ENCODE measurements at regions of chr7 and their contacts with region 1.

Region 1: DNA sequence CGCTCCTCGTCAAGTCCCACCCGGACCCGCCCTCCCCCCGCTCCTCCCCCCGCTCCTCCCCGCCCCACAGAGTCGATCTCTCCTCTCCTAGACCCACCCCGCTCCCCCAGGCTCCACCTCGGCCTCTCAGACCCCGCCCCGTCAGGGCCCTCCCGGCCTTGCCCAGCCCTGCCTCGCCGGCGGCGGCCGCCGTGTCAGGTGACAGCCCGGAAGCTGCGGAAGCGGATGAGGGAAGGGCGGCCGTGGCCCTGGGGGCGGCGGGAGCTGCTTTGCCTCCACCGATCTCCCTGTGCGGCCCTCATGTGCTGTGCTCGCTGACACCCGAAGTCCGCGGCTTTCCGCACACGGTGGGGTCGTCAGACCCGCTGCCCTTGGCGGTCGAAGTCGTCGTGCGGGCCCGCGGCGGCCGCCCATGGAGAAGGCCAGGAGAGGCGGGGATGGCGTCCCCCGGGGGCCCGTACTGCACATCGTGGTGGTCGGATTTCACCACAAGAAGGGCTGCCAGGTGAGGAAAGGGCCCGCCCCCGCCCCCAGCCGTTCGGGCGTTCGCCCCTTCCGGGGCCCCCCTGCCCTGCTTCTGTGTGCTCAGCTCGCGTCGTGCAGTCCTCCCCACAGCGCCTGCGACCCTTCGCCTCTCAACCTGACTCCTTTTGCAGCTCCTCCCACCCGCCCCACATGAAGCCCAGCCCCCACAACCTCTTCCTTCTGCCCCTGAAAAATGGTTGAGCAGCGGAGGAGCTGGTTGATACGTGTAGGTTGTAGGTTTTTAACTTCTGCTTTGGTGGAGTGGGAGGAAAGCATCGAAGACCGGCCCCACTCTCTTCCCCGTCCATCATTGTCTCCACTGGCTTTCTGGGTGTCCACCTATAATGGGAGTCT is at the start of gene AVL9:
- DNase-seq: peak; percentile 100
- H3K4me3 Mint-ChIP-seq: peak within 1 kb of the TSS; percentile 86
- H3K27ac Mint-ChIP-seq: peak within 1 kb of the TSS; percentile 93
- H3K4me1 Mint-ChIP-seq: peaks cover 36% of the 10 kb centered on the region
- H3K27me3 Mint-ChIP-seq: no peaks in the 10 kb centered on the region
- total RNA-seq, gene AVL9: 39.6 to 44.2 TPM

Region 2: GRCh38 chr7:30594549-30595435 is 1900.7 kb before region 1 on chr7 and contains the start of gene GARS1:
- CTCF ChIA-PET with region 1: no interaction called
- POLR2A ChIA-PET with region 1: no interaction called
- intact Hi-C with region 1: loop called (anchors 10 kb)
- DNase-seq: peak; percentile 92
- H3K4me3 Mint-ChIP-seq: peak within 1 kb of the TSS; percentile 99
- H3K27ac Mint-ChIP-seq: peak within 1 kb of the TSS; percentile 95
- H3K4me1 Mint-ChIP-seq: peaks cover 53% of the 10 kb centered on the region
- H3K27me3 Mint-ChIP-seq: no peaks in the 10 kb centered on the region
- total RNA-seq, gene GARS1: 345 to 368 TPM

Region 3: DNA sequence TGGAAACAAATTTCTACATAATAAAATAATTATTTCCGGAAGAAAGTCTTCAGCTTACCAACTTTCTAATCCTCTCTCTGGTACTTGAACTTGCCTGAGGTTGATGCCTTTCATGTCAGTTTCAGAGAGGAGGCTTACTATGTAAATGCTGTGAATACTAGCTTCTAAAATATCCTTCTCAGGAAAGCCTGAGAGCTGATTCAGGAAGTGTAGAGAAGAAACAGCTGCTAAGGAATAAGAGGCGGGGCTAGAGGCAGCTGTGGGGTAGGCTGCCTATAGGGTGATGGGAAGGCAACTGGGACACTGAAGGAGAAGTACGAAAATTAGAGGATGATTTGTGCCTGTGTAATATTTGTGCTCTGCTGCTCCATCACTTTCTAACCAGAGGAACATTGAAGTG is 69.0 kb after region 1 on chr7:
- CTCF ChIA-PET with region 1: interaction called, 5 read pairs
- POLR2A ChIA-PET with region 1: no interaction called
- intact Hi-C with region 1: loop called (anchors 5 kb)
- DNase-seq: no peak
- H3K4me3 Mint-ChIP-seq: no peak overlapping the region
- H3K27ac Mint-ChIP-seq: no peak overlapping the region
- H3K4me1 Mint-ChIP-seq: peaks cover 14% of the 10 kb centered on the region
- H3K27me3 Mint-ChIP-seq: no peaks in the 10 kb centered on the region

Region 4: DNA sequence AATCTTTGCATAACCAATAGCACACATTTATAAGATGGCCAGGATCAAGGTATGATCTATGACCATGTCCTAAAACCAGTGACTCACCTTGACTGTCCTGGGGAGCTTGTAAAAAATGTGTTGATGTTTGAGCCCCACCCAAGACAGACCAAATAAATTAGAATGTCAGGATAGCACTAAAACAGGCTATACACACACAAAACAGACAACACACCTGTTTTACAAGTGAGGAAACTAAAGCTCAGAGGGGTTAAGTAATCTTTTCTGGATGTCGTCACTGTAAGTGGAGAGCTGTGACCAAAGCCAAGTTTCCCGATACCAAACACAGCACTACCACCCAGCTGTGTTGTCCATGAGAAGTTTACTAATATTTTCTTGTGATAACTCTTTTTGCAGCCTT is 84.2 kb after region 1 on chr7:
- CTCF ChIA-PET with region 1: no interaction called
- POLR2A ChIA-PET with region 1: no interaction called
- intact Hi-C with region 1: no loop called
- DNase-seq: no peak
- H3K4me3 Mint-ChIP-seq: no peak overlapping the region
- H3K27ac Mint-ChIP-seq: no peak overlapping the region
- H3K4me1 Mint-ChIP-seq: peaks cover 3% of the 10 kb centered on the region
- H3K27me3 Mint-ChIP-seq: no peaks in the 10 kb centered on the region

Region 5: GRCh38 chr7:32905175-32905662 is 409.7 kb after region 1 on chr7:
- CTCF ChIA-PET with region 1: no interaction called
- POLR2A ChIA-PET with region 1: interaction called, 4 read pairs
- intact Hi-C with region 1: loop called (anchors 2 kb)
- DNase-seq: peak; percentile 89
- H3K4me3 Mint-ChIP-seq: peak overlapping the region; percentile 73
- H3K27ac Mint-ChIP-seq: peak overlapping the region; percentile 93
- H3K4me1 Mint-ChIP-seq: peaks cover 17% of the 10 kb centered on the region
- H3K27me3 Mint-ChIP-seq: no peaks in the 10 kb centered on the region

Region 6: DNA sequence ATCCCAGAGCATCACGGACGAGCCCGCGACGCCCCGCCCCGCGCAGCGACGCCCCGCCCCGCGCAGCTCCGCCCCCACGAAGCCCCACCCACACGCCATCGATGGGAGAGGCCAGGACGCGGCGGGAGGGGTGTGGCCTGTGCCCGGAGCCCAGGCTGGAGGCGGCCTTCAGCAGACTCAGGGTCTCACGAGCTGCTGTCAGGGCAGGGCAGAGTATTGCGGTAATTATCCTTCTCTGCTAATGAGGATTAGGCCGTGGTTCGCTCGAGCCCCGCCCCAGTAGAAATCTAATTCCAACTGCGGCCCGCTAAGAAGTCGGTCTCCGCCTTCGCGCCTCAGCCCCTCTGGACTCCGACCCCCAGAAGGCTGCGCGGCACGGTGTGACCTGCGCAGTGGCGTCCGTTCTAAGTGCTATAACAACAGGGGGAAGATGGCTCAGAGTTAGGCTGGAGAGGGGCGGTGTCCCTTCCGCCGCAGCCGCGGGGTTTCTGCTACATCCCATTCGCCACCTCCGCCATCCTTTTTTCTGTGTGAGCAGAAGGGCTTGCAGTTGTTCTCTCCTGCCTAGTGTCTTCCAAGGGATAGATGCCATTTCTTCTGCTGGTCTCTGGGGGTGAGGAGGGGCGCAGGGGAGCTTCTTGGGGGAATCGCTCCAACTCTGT is 567.4 kb after region 1 on chr7:
- CTCF ChIA-PET with region 1: no interaction called
- POLR2A ChIA-PET with region 1: interaction called, 3 read pairs
- intact Hi-C with region 1: loop called (anchors 2 kb)
- DNase-seq: peak; percentile 95
- H3K4me3 Mint-ChIP-seq: peak overlapping the region; percentile 90
- H3K27ac Mint-ChIP-seq: peak overlapping the region; percentile 88
- H3K4me1 Mint-ChIP-seq: peaks cover 31% of the 10 kb centered on the region
- H3K27me3 Mint-ChIP-seq: no peaks in the 10 kb centered on the region

Measured in activated CD4-positive, alpha-beta memory T cell treated with anti-CD3 and anti-CD28 coated beads for 36 hours (primary cell).